Naive thymus-derived CD4-positive, alpha-beta T cell (primary cell): ENCODE measurements at regions of chr10 and their contacts with region 1.

Region 1: DNA sequence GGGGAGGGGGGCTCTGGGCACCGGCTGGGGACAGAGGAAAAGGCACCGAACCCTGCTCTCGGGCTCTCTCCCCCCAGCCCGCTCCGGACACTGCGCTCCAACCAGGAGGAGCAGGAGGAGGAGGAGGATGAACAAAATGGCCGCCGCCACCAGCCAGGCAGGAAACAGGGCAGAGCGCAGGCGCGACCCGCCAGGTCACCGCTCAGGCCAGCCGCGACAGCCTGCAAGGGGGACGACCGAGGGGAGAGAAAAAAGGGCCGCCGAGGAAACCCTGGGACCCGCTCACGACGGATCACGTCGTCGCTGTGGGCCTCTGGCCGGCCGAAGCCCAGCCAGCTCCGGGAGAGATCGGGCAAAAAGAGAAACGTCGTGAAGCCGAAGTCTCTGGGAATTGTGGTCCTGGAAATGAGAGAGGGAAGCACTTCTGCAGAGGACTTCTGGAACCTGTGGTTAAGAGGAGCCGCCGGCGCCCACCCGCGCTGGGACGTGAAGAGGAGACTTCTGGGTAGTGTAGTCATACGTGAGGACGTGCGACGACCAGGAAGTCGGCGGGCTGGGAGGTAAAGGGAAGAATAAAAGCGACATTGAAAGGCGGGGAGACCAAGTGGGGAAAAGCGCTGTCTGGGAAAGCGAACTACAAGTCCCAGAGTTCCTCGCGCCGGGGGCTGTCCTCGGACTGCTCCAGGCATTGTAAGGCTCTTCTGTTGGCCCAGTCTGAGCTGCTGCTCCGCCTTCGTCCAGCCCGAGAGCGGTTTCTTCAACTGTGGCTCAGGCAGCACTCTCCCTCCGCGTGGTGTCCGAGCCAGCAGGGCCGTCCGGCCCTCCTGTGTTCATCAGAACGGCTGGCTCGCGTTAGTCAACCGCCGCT is at the start of gene TIAL1:
- DNase-seq: peak; percentile 73 to 95 (median 89)
- ATAC-seq: peak; percentile 88
- H3K4me3 ChIP-seq: peak within 1 kb of the TSS; percentile 96
- H3K4me3 Mint-ChIP-seq: peak within 1 kb of the TSS; percentile 85 to 99 (median 96)
- H3K27ac ChIP-seq: peak within 1 kb of the TSS; percentile 98
- H3K27ac Mint-ChIP-seq: peak within 1 kb of the TSS; percentile 90 to 99 (median 96)
- H3K4me1 ChIP-seq: peaks cover 28 to 38% of the 10 kb centered on the region in 2 donors
- H3K4me1 Mint-ChIP-seq: peaks cover 35 to 56% (median 48%) of the 10 kb centered on the region in 7 donors
- H3K27me3 ChIP-seq: no peaks in the 10 kb centered on the region
- H3K27me3 Mint-ChIP-seq: no peaks in the 10 kb centered on the region
- total RNA-seq, gene TIAL1: 166 to 228 (median 176) TPM

Region 2: DNA sequence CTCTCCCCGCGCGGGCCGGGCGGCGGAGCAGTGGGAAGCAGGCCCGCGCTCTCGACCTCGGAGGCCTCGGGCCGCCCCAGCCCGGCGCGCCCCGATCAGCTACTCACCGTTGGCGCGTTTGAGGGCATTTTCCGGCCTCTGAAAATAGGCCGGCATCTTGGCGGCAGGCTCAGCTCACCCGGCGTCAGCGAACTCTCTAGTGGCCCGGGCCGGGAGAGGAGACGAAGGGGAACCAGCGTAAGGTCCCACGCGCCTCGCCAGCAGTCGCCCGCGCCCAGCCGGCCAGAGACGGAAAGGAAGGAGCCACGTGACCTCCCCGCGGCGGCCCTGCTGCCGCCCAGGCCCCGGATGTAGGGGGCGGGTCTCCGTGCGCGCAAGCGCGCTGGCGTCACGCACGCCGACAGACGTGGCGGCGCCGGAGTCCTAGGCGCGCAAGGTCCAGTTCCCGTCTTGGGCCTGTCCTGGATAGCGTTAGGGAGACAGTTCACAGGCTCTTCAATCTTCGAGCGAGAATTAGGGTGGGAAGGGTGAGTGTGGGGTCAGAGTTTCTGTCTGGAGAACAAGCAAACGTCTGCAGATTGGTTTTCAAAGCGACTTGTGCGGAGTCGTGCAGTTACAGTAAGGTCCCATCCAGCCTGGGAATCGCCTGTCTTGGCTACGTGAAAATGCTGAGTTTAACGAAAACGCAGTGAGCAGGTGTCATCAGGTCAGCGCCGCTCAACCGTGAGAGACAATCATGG is 516.1 kb before region 1 on chr10 and contains the start of gene EIF3A:
- CTCF ChIA-PET with region 1: no interaction called
- POLR2A ChIA-PET with region 1: no interaction called
- intact Hi-C with region 1: loop called in 1 of 2 experiments (anchors 1 kb)
- DNase-seq: peak; percentile 87 to 98 (median 93)
- ATAC-seq: peak; percentile 90
- H3K4me3 ChIP-seq: peak within 1 kb of the TSS; percentile 83
- H3K4me3 Mint-ChIP-seq: peak within 1 kb of the TSS; percentile 86 to 99 (median 98)
- H3K27ac ChIP-seq: peak within 1 kb of the TSS; percentile 91
- H3K27ac Mint-ChIP-seq: peak within 1 kb of the TSS; percentile 93 to 100 (median 98)
- H3K4me1 ChIP-seq: peaks cover 6 to 26% of the 10 kb centered on the region in 2 donors
- H3K4me1 Mint-ChIP-seq: peaks cover 28 to 55% (median 45%) of the 10 kb centered on the region in 7 donors
- H3K27me3 ChIP-seq: no peaks in the 10 kb centered on the region
- H3K27me3 Mint-ChIP-seq: peaks cover 0 to 2% (median 0%) of the 10 kb centered on the region in 5 donors
- total RNA-seq, gene EIF3A: 87.8 to 137 (median 96.0) TPM

Region 3: GRCh38 chr10:119131512-119132240 is 465.1 kb before region 1 on chr10:
- CTCF ChIA-PET with region 1: no interaction called
- POLR2A ChIA-PET with region 1: no interaction called
- intact Hi-C with region 1: loop called in 1 of 2 experiments (anchors 1 kb)
- DNase-seq: peak in 8 of 9 donors; percentile 24 to 61 (median 40)
- ATAC-seq: peak; percentile 77
- H3K4me3 ChIP-seq: peak overlapping the region; percentile 73
- H3K4me3 Mint-ChIP-seq: peak overlapping the region; percentile 81 to 96 (median 91)
- H3K27ac ChIP-seq: peak overlapping the region; percentile 66
- H3K27ac Mint-ChIP-seq: peak overlapping the region; percentile 92 to 97 (median 95)
- H3K4me1 ChIP-seq: peaks cover 8 to 16% of the 10 kb centered on the region in 2 donors
- H3K4me1 Mint-ChIP-seq: peaks cover 16 to 59% (median 32%) of the 10 kb centered on the region in 7 donors
- H3K27me3 ChIP-seq: no peaks in the 10 kb centered on the region
- H3K27me3 Mint-ChIP-seq: no peaks in the 10 kb centered on the region

Region 4: DNA sequence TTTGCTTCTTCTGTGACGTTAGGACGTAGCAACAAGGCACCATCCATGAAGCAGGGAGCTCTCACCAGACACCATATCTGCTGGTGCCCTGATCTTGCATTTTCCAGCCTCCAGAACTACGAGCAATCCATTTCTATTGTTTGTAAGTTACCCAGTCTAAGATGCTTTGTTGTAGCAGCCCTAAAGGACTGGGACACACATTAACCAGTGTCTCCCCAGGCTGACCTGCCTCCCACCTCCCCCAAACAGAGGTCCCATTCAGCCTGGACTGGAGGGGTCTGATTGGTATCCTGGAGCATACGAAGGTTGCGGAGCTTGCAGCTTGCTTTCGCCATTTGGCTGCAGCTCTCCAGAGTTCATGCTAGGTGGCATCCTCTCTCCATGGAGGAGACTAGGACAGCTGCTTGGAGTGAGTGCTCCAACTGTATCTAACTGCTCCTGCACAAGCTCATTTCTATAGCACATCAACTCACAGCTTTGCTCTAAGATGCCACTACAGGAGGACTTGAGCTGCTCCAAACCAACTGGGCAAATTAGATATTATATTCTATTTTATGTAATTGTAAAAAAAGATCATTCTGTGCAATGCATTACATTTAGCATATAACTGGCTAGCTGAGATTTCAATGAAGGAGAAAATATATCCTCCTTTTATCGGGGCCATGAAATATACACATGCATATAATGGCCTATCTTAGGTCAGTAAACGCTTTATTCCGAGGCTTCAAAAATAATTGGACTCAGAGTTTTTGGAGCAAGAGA is 397.4 kb before region 1 on chr10:
- CTCF ChIA-PET with region 1: interaction called, 13 read pairs
- POLR2A ChIA-PET with region 1: no interaction called
- intact Hi-C with region 1: loop called in 1 of 2 experiments (anchors 2 kb)
- DNase-seq: peak in 8 of 9 donors; percentile 42 to 72 (median 58)
- ATAC-seq: peak; percentile 93
- H3K4me3 ChIP-seq: no peak overlapping the region
- H3K4me3 Mint-ChIP-seq: peak overlapping the region in 1 of 10 donors; percentile 35
- H3K27ac ChIP-seq: no peak overlapping the region
- H3K27ac Mint-ChIP-seq: peak overlapping the region in 3 of 9 donors; percentile 46 to 73 (median 56)
- H3K4me1 ChIP-seq: no peaks in the 10 kb centered on the region
- H3K4me1 Mint-ChIP-seq: peaks cover 4 to 30% (median 9%) of the 10 kb centered on the region in 7 donors
- H3K27me3 ChIP-seq: no peaks in the 10 kb centered on the region
- H3K27me3 Mint-ChIP-seq: peaks cover 0 to 5% (median 0%) of the 10 kb centered on the region in 5 donors

Region 5: GRCh38 chr10:119517235-119518141 is 79.3 kb before region 1 on chr10:
- CTCF ChIA-PET with region 1: no interaction called
- POLR2A ChIA-PET with region 1: no interaction called
- intact Hi-C with region 1: loop called in 1 of 2 experiments (anchors 2 kb)
- DNase-seq: peak in 6 of 9 donors; percentile 28 to 59 (median 44)
- ATAC-seq: peak; percentile 60
- H3K4me3 ChIP-seq: peak overlapping the region; percentile 42
- H3K4me3 Mint-ChIP-seq: peak overlapping the region; percentile 65 to 88 (median 78)
- H3K27ac ChIP-seq: peak overlapping the region; percentile 81
- H3K27ac Mint-ChIP-seq: peak overlapping the region; percentile 89 to 98 (median 95)
- H3K4me1 ChIP-seq: peaks cover 33 to 68% of the 10 kb centered on the region in 2 donors
- H3K4me1 Mint-ChIP-seq: peaks cover 45 to 86% (median 76%) of the 10 kb centered on the region in 7 donors
- H3K27me3 ChIP-seq: no peaks in the 10 kb centered on the region
- H3K27me3 Mint-ChIP-seq: no peaks in the 10 kb centered on the region

Region 6: GRCh38 chr10:119872860-119873681 is 276.3 kb after region 1 on chr10:
- CTCF ChIA-PET with region 1: no interaction called
- POLR2A ChIA-PET with region 1: interaction called, 6 read pairs
- intact Hi-C with region 1: loop called (anchors 1 kb)
- DNase-seq: peak; percentile 81 to 88 (median 86)
- ATAC-seq: peak; percentile 96
- H3K4me3 ChIP-seq: peak overlapping the region; percentile 97
- H3K4me3 Mint-ChIP-seq: peak overlapping the region; percentile 82 to 92 (median 89)
- H3K27ac ChIP-seq: peak overlapping the region; percentile 84
- H3K27ac Mint-ChIP-seq: peak overlapping the region; percentile 79 to 95 (median 92)
- H3K4me1 ChIP-seq: peaks cover 21 to 28% of the 10 kb centered on the region in 2 donors
- H3K4me1 Mint-ChIP-seq: peaks cover 23 to 46% (median 41%) of the 10 kb centered on the region in 7 donors
- H3K27me3 ChIP-seq: no peaks in the 10 kb centered on the region
- H3K27me3 Mint-ChIP-seq: peaks cover 0 to 6% (median 0%) of the 10 kb centered on the region in 5 donors